ENCODE measurements at regions of chr1 and their contacts with region 1.

Region 1: GRCh38 chr1:92968138-92969032 is 7.1 kb upstream of the DIPK1A start:
- DNase-seq: peak; percentile 58
- ATAC-seq: peak; percentile 68
- H3K4me3 ChIP-seq: no peak overlapping the region
- H3K4me3 Mint-ChIP-seq: no peak overlapping the region
- H3K27ac ChIP-seq: no peak overlapping the region
- H3K27ac Mint-ChIP-seq: peak overlapping the region; percentile 29
- H3K4me1 ChIP-seq: peaks cover 50 to 60% of the 10 kb centered on the region in 2 donors
- H3K4me1 Mint-ChIP-seq: peaks cover 38% of the 10 kb centered on the region
- H3K27me3 ChIP-seq: no peaks in the 10 kb centered on the region
- H3K27me3 Mint-ChIP-seq: no peaks in the 10 kb centered on the region
- CTCF ChIP-seq: peak; percentile 70

Region 2: DNA sequence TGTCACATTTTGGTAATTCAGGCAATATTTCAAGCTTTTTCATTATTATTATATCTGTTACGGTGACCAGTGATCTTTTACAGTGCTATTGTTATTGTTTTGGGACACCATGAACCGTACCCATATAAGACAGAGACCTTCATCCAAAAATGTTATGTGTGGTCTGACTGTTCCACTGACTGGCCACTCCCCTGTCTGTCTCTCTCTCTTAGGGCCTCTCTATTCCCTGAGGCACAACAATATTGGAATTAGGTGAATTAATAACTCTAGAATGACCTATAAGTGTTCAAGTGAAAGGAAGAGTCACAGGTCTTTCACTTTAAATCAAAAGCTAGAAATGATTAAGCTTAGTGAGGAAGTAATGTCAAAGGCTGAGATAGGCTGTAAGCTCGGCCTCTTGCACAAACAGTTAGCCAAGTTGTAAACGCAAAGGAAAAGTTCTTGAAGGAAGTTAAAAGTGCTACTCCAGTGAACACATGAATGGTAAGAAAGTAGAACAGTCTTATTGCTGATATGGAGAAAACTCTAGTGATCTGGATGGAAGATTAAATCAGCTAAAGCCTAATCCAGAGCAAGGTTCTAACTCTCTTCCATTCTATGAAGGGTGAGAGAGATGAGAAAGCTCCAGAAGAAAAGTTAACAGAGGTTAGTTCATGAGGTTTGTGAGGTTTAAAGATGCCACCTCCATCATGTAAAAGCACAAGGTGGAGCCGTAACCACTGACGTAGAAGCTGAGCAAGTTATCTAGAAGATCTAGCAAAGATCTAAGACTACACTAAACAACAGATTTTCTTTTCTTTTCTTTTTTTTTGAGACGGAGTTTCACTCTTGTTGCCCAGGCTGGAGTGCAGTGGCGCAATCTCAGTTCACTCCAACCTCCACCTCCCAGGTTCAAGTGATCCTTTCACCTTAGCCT is 12.6 kb after region 1 on chr1:
- CTCF ChIA-PET with region 1: interaction called, 174 read pairs
- POLR2A ChIA-PET with region 1: interaction called, 116 read pairs
- intact Hi-C with region 1: no loop called
- DNase-seq: peak; percentile 48
- ATAC-seq: peak; percentile 37
- H3K4me3 ChIP-seq: peak overlapping the region in 1 of 5 experiments; percentile 24
- H3K4me3 Mint-ChIP-seq: peak overlapping the region; percentile 69
- H3K27ac ChIP-seq: peak overlapping the region; percentile 47 to 80
- H3K27ac Mint-ChIP-seq: peak overlapping the region; percentile 98
- H3K4me1 ChIP-seq: peaks cover 54 to 55% of the 10 kb centered on the region in 2 donors
- H3K4me1 Mint-ChIP-seq: peaks cover 52% of the 10 kb centered on the region
- H3K27me3 ChIP-seq: no peaks in the 10 kb centered on the region
- H3K27me3 Mint-ChIP-seq: no peaks in the 10 kb centered on the region
- CTCF ChIP-seq: no peak

Region 3: GRCh38 chr1:92987462-92987861 is 19.1 kb after region 1 on chr1:
- CTCF ChIA-PET with region 1: interaction called, 405 read pairs
- POLR2A ChIA-PET with region 1: interaction called, 4 read pairs
- intact Hi-C with region 1: no loop called
- DNase-seq: no peak
- ATAC-seq: no peak
- H3K4me3 ChIP-seq: no peak overlapping the region
- H3K4me3 Mint-ChIP-seq: no peak overlapping the region
- H3K27ac ChIP-seq: no peak overlapping the region
- H3K27ac Mint-ChIP-seq: no peak overlapping the region
- H3K4me1 ChIP-seq: peaks cover 29% of the 10 kb centered on the region in 2 donors
- H3K4me1 Mint-ChIP-seq: peaks cover 37% of the 10 kb centered on the region
- H3K27me3 ChIP-seq: no peaks in the 10 kb centered on the region
- H3K27me3 Mint-ChIP-seq: no peaks in the 10 kb centered on the region
- CTCF ChIP-seq: no peak

Region 4: GRCh38 chr1:93000751-93001175 is 32.4 kb after region 1 on chr1:
- CTCF ChIA-PET with region 1: interaction called, 15 read pairs
- POLR2A ChIA-PET with region 1: no interaction called
- intact Hi-C with region 1: no loop called
- DNase-seq: no peak
- ATAC-seq: no peak
- H3K4me3 ChIP-seq: no peak overlapping the region
- H3K4me3 Mint-ChIP-seq: no peak overlapping the region
- H3K27ac ChIP-seq: no peak overlapping the region
- H3K27ac Mint-ChIP-seq: no peak overlapping the region
- H3K4me1 ChIP-seq: peaks cover 12 to 13% of the 10 kb centered on the region in 2 donors
- H3K4me1 Mint-ChIP-seq: peaks cover 14% of the 10 kb centered on the region
- H3K27me3 ChIP-seq: no peaks in the 10 kb centered on the region
- H3K27me3 Mint-ChIP-seq: no peaks in the 10 kb centered on the region
- CTCF ChIP-seq: no peak

Region 5: GRCh38 chr1:93080179-93080823 is 111.9 kb after region 1 on chr1:
- CTCF ChIA-PET with region 1: no interaction called
- POLR2A ChIA-PET with region 1: no interaction called
- intact Hi-C with region 1: no loop called
- DNase-seq: peak; percentile 77
- ATAC-seq: peak; percentile 50
- H3K4me3 ChIP-seq: peak overlapping the region; percentile 85 to 98 (median 89)
- H3K4me3 Mint-ChIP-seq: peak overlapping the region; percentile 100
- H3K27ac ChIP-seq: peak overlapping the region; percentile 80 to 87
- H3K27ac Mint-ChIP-seq: peak overlapping the region; percentile 99
- H3K4me1 ChIP-seq: peaks cover 24 to 30% of the 10 kb centered on the region in 2 donors
- H3K4me1 Mint-ChIP-seq: peaks cover 46% of the 10 kb centered on the region
- H3K27me3 ChIP-seq: no peaks in the 10 kb centered on the region
- H3K27me3 Mint-ChIP-seq: no peaks in the 10 kb centered on the region
- CTCF ChIP-seq: peak; percentile 77

Measured in B cell (primary cell).